ENCODE measurements at regions of chr14 and their contacts with region 1.

Region 1: DNA sequence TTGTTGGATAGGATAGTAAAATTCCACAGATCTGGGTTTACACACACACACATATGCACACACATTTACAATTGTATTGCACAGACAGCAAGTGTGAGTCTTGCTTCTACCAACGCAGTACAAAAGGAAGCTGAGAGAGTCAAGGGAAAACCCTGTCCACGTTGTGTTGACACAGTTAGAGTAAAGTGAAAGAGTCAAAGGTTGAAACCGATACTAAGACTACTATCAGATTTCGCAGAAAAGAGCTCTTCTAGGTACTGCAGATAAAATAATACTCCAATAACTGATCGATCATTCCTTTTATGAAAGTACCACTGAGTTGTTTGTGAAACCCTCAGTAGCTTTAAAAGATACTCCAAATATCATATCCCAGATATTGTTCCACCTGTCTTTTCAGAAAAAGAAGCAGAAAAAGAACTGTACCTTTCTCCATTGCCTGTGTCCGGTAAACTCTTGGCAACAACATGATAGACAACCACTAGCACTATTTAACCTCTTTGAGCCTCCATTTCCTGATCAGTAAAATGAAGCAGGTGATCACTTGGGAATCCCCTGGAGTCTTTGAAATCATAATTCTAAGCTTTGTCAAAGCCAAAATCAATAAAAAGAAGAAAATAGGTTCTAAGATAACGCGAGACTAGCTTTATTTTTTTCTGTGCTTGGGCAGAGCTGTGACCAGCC is 224.6 kb upstream of the FOXN3 start:
- DNase-seq: peak; percentile 41
- H3K4me3 Mint-ChIP-seq: peak overlapping the region; percentile 59
- H3K27ac Mint-ChIP-seq: peak overlapping the region; percentile 87
- H3K4me1 Mint-ChIP-seq: peaks cover 59% of the 10 kb centered on the region
- H3K27me3 Mint-ChIP-seq: no peaks in the 10 kb centered on the region

Region 2: GRCh38 chr14:89626233-89626806 is 15.3 kb before region 1 on chr14:
- intact Hi-C with region 1: loop called (anchors 1 kb)
- DNase-seq: no peak
- H3K4me3 Mint-ChIP-seq: no peak overlapping the region
- H3K27ac Mint-ChIP-seq: peak overlapping the region; percentile 89
- H3K4me1 Mint-ChIP-seq: peaks cover 67% of the 10 kb centered on the region
- H3K27me3 Mint-ChIP-seq: no peaks in the 10 kb centered on the region

Region 3: GRCh38 chr14:89669193-89669592 is 27.6 kb after region 1 on chr14:
- intact Hi-C with region 1: loop called (anchors 1 kb)
- DNase-seq: peak; percentile 5
- H3K4me3 Mint-ChIP-seq: no peak overlapping the region
- H3K27ac Mint-ChIP-seq: peak overlapping the region; percentile 28
- H3K4me1 Mint-ChIP-seq: peaks cover 30% of the 10 kb centered on the region
- H3K27me3 Mint-ChIP-seq: no peaks in the 10 kb centered on the region

Region 4: DNA sequence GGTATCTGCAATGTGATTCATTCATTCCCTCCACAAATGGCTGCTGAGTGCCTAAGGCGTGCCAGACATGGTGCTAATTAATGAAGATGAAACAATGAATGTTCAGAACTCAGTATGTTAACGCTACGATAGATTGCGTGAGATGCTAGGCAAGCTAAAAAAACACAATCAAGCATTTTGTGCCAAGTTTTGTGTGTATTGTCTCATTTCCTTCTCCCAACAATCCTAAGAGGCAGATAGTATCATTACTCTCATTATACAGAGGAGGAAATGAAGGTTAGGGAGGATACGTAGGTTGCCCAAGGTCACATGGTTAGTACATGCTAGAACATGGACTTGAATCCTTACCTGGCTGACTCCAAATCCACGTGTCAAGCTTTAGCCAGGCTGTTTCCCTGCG is 48.5 kb after region 1 on chr14:
- intact Hi-C with region 1: no loop called
- DNase-seq: no peak
- H3K4me3 Mint-ChIP-seq: no peak overlapping the region
- H3K27ac Mint-ChIP-seq: no peak overlapping the region
- H3K4me1 Mint-ChIP-seq: peaks cover 9% of the 10 kb centered on the region
- H3K27me3 Mint-ChIP-seq: no peaks in the 10 kb centered on the region

Region 5: GRCh38 chr14:89701211-89702043 is 59.8 kb after region 1 on chr14:
- intact Hi-C with region 1: loop called (anchors 1 kb)
- DNase-seq: peak; percentile 78
- H3K4me3 Mint-ChIP-seq: peak overlapping the region; percentile 70
- H3K27ac Mint-ChIP-seq: peak overlapping the region; percentile 84
- H3K4me1 Mint-ChIP-seq: peaks cover 51% of the 10 kb centered on the region
- H3K27me3 Mint-ChIP-seq: peaks cover 4% of the 10 kb centered on the region

Region 6: GRCh38 chr14:89720741-89721315 is 79.2 kb after region 1 on chr14:
- intact Hi-C with region 1: loop called (anchors 2 kb)
- DNase-seq: peak; percentile 59
- H3K4me3 Mint-ChIP-seq: peak overlapping the region; percentile 49
- H3K27ac Mint-ChIP-seq: peak overlapping the region; percentile 86
- H3K4me1 Mint-ChIP-seq: peaks cover 64% of the 10 kb centered on the region
- H3K27me3 Mint-ChIP-seq: no peaks in the 10 kb centered on the region

Region 7: GRCh38 chr14:89750281-89750755 is 108.7 kb after region 1 on chr14:
- intact Hi-C with region 1: loop called (anchors 1 kb)
- DNase-seq: no peak
- H3K4me3 Mint-ChIP-seq: no peak overlapping the region
- H3K27ac Mint-ChIP-seq: no peak overlapping the region
- H3K4me1 Mint-ChIP-seq: peaks cover 23% of the 10 kb centered on the region
- H3K27me3 Mint-ChIP-seq: no peaks in the 10 kb centered on the region

Measured in activated T-helper 1 cell treated with anti-CD3 and anti-CD28 coated beads, Interleukin-12 subunit alpha, Interleukin-12 subunit beta, Interleukin-2, Interleukin-4 antibody, amounts not matched to agents 30 ng/mL and 10 ng/mL and 1 ng/mL, durations not matched to agents 14 hours and 24 hours and 36 hours (primary cell).